Activated CD8-positive, alpha-beta T cell treated with anti-CD3 and anti-CD28 coated beads, Interleukin-2, amount 10 ng/mL, durations not matched to agents 7 days and 5 days (primary cell): ENCODE measurements at regions of chr20 and their contacts with region 1.

Region 1: DNA sequence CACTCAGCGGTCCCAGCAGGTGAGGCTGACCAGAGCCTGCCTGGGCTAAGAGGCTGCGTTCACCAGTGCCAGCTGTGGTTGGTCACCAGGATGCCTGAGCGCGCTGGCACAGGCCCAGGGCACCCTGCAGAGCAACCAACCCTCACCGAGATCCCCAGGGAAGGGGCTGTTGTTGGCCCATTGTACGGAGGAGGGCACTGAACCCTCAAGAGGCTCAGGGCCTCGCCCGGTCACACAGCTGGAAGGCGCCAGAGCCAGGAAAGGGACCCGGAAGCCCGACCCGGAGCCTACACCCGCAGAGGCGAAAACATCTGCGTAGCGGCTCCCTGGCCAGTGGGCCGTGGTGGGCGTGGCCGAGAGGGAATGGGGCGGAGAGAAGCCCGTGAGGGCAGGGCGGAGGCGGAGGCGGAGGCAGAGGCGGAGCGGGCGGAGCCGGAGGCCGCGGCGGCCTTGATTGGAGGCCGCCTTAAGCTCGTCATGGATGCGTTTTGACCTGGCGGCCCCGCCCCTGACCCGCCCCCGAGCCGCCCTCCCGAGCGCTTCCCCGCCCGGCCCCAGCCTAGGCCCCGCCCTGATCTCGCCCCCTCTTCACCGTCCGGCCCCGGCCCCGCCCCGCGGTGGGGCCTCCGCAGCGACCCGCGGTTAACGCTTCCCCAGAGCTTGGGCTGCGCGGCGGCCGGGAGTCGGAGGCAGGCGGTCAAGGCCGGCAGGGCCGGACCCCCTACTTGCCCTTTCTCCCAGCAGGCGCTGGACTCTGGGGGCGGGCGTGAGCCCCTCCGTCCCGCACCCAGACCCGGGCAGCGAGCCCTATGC is 2.2 kb upstream of the MRGBP start:
- DNase-seq: peak; percentile 96
- ATAC-seq: peak; percentile 79
- H3K4me3 Mint-ChIP-seq: peak overlapping the region; percentile 78
- H3K27ac Mint-ChIP-seq: peak overlapping the region; percentile 90
- H3K4me1 Mint-ChIP-seq: peaks cover 48% of the 10 kb centered on the region
- H3K27me3 Mint-ChIP-seq: no peaks in the 10 kb centered on the region

Region 2: GRCh38 chr20:62500237-62500864 is 293.8 kb before region 1 on chr20:
- CTCF ChIA-PET with region 1: interaction called, 11 read pairs
- POLR2A ChIA-PET with region 1: interaction called, 3 read pairs
- DNase-seq: peak; percentile 85
- ATAC-seq: peak; percentile 73
- H3K4me3 Mint-ChIP-seq: no peak overlapping the region
- H3K27ac Mint-ChIP-seq: peak overlapping the region; percentile 43
- H3K4me1 Mint-ChIP-seq: peaks cover 25% of the 10 kb centered on the region
- H3K27me3 Mint-ChIP-seq: no peaks in the 10 kb centered on the region

Region 3: DNA sequence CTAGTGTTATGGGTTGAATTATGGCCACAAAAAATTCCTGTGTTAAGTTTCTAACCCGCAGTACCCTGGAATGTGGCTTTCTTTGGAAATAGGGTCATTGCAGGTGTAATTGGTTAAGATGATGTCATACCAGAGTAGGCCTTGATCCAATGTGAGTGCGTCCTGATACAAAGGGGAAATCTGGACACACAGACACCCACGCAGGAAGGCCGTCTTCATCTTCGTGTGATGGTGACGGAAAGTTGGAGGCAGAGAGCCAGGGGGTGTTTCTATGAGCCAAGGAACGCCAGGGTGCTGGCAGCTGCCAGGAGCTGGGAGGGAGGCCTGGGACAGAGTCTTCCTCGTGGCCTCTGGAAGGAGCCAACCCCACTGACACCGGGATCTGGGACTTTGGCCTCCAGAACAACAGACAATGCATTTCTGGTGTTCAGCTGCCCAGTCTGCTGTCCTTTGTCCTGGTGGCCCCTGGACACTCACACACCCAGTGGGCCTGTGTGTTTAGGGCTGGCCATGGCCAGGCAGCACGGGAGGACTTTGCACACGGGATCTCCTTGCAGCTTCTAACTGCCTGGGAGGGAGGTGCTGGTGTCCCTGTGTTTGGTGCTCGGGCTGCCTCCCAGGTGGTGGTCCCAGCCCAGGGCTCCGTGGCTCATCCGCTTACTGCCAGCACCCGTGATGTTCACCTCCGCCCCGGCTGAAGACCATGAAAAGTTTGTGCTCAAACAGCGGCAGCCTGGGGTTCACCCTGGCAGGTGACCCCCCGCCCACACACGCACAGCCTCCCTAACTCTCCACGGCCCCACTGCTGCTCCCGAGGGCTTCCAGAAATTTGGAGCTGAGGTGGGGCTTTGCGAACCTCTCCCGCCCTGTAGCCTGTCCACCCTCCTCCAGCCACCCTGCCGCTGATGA is 264.9 kb before region 1 on chr20:
- CTCF ChIA-PET with region 1: no interaction called
- POLR2A ChIA-PET with region 1: no interaction called
- DNase-seq: no peak
- ATAC-seq: no peak
- H3K4me3 Mint-ChIP-seq: no peak overlapping the region
- H3K27ac Mint-ChIP-seq: no peak overlapping the region
- H3K4me1 Mint-ChIP-seq: peaks cover 1% of the 10 kb centered on the region
- H3K27me3 Mint-ChIP-seq: no peaks in the 10 kb centered on the region

Region 4: DNA sequence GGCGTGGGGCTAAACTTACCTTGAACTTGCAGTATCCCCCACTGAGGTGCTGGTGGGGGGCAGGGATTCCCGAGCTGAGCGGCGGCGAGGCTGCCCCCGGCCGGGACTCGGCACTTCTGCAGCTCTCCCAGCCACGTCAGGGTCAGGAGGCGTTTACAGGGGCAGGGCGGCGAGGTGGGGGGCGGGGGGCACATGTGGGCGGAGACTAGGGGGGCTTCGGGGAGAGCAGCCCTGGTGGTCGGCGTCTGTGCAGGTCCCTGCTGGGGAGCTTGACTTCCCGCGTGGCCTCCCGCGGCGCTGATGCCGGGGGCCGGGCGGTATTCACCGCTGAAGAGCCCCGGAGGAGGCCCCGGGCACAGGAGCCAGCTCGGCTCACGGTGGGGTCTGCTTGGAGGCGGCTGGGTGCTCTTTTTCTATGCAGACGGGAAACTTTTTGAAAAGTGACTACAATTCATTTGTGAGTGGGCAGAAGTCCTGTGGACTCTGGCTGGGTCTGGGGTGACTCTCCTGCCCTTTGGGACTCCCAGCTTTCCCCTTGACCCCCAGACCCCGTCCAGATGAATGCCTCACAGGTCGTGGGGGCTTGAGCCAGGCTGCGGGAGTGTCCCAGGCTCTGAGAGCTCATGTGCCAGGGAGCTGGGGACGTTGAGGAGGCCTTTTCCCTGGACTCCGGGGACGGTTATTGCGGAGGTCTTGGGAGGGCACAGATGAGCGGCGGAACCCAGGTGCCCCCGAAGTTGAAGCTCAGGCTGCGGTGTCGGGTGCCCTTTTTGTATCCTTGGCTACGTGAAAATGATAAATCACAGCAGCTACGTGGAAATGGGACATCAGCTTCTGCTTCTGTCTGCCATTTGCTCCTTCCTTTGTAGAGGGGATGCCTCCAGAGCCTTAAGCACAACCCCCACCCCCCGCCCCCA is 242.5 kb before region 1 on chr20:
- CTCF ChIA-PET with region 1: no interaction called
- POLR2A ChIA-PET with region 1: no interaction called
- DNase-seq: no peak
- ATAC-seq: no peak
- H3K4me3 Mint-ChIP-seq: no peak overlapping the region
- H3K27ac Mint-ChIP-seq: no peak overlapping the region
- H3K4me1 Mint-ChIP-seq: peaks cover 11% of the 10 kb centered on the region
- H3K27me3 Mint-ChIP-seq: peaks cover 28% of the 10 kb centered on the region

Region 5: DNA sequence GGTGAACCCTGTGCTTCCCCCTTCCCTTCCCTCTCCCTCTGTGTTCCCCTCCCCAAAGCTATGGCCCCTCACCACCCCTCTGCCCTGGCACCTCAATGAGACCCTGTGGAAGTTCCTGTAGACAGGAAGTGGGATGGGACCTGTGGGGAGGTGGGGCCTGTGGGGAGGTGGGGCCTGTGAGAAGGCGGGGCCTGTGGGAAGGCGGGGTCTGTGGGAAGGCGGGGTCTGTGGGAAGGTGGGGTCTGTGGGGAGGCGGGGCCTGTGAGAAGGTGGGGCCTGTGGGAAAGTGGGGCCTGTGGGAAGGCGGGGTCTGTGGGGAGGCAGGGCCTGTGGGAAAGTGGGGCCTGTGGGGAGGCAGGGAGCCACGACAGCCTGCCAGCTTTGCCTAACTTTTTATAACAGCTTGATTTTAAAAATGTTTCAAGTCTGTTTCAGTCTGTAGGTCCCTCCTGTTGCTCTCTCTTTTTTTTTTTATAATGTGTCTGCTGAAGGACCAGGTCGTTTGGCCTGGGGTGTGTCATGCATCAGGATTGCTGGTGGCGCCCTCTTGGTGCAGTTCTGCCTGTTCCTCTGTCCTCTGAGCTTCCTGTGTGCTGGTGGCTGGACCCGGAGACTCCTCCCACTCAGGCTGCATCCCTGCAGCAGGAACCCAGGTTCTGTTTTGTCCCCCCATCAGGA is 222.3 kb before region 1 on chr20:
- CTCF ChIA-PET with region 1: no interaction called
- POLR2A ChIA-PET with region 1: no interaction called
- DNase-seq: peak; percentile 29
- ATAC-seq: peak; percentile 73
- H3K4me3 Mint-ChIP-seq: no peak overlapping the region
- H3K27ac Mint-ChIP-seq: no peak overlapping the region
- H3K4me1 Mint-ChIP-seq: peaks cover 9% of the 10 kb centered on the region
- H3K27me3 Mint-ChIP-seq: peaks cover 17% of the 10 kb centered on the region

Region 6: GRCh38 chr20:62623488-62624324 is 170.4 kb before region 1 on chr20:
- CTCF ChIA-PET with region 1: interaction called, 18 read pairs
- POLR2A ChIA-PET with region 1: interaction called, 4 read pairs
- DNase-seq: peak; percentile 96
- ATAC-seq: peak; percentile 95
- H3K4me3 Mint-ChIP-seq: peak overlapping the region; percentile 73
- H3K27ac Mint-ChIP-seq: peak overlapping the region; percentile 95
- H3K4me1 Mint-ChIP-seq: peaks cover 50% of the 10 kb centered on the region
- H3K27me3 Mint-ChIP-seq: no peaks in the 10 kb centered on the region

Region 7: DNA sequence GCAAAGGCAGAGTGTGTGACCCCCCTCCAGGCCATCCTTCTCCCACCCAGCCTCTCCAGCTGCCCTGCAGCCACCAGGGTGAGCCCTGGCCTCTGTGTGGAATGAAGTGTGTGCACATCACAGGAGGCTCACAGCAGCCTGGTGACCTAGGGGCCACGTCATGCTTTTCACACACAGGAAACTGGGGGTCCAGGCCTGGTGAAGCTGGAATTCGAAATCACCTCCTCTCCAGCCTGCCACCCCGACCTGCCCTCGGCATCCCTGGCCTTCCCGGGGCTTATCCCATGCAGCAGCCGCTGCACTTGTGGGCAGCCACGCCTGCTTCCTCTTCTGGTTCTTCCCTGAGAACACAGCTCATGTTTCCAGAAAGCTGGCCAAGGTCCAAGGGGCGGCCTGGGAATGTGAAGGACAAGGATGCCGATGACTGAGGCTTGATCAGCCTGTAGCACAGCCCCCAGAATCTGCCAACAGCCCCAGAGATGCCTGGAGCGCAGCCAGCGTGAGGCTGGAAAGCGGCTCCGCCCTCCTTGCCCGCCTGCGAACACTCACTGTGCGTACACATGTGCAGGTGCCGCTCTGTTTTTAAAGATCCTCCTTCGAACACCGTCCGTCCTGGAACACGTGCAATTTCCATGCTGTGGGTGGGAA is 89.7 kb before region 1 on chr20:
- CTCF ChIA-PET with region 1: interaction called, 17 read pairs
- POLR2A ChIA-PET with region 1: interaction called, 3 read pairs
- DNase-seq: no peak
- ATAC-seq: no peak
- H3K4me3 Mint-ChIP-seq: no peak overlapping the region
- H3K27ac Mint-ChIP-seq: no peak overlapping the region
- H3K4me1 Mint-ChIP-seq: peaks cover 11% of the 10 kb centered on the region
- H3K27me3 Mint-ChIP-seq: peaks cover 27% of the 10 kb centered on the region

Region 8: DNA sequence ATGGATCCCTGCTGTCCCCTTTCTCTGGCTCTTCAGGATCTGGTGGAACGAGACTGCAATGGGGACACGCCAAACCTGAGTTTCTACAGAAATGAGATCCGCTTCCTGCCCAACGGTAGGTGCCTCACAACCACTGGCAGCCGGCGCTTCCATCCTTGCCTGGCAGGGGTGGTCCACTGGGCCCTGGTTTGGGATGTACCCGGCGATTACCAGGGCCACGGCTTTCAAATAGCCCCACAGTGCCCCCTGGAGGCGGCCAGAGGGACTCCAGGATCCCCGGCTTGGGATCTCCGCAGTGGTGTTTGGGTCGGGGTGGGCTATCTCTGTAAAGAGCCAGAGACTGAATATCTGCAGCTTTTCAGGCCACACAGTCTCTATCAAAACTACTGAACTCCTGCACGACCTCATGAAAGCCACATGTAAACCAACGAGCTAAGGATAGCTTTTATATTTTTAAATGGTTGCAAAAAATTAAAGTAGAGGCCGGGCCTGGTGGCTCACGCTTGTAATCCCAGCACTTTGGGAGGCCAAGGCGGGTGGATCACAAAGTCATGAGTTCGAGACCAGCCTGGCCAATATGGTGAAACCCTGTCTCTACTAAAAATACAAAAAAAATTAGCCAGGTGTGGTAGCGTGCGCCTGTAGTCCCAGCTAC is 14.2 kb after region 1 on chr20:
- CTCF ChIA-PET with region 1: interaction called, 18 read pairs
- POLR2A ChIA-PET with region 1: interaction called, 21 read pairs
- DNase-seq: peak; percentile 80
- ATAC-seq: peak; percentile 50
- H3K4me3 Mint-ChIP-seq: peak overlapping the region; percentile 29
- H3K27ac Mint-ChIP-seq: no peak overlapping the region
- H3K4me1 Mint-ChIP-seq: peaks cover 31% of the 10 kb centered on the region
- H3K27me3 Mint-ChIP-seq: no peaks in the 10 kb centered on the region